ENCODE measurements at regions of chr16 and their contacts with region 1.

Region 1: GRCh38 chr16:10122546-10122945 is 59.7 kb downstream of the GRIN2A start:
- DNase-seq: peak; percentile 72
- H3K4me3 Mint-ChIP-seq: peak overlapping the region; percentile 46
- H3K27ac Mint-ChIP-seq: peak overlapping the region; percentile 83
- H3K4me1 Mint-ChIP-seq: peaks cover 68% of the 10 kb centered on the region
- H3K27me3 Mint-ChIP-seq: no peaks in the 10 kb centered on the region
- CTCF ChIP-seq: peak; percentile 69

Region 2: GRCh38 chr16:10031473-10031872 is 91.1 kb before region 1 on chr16:
- CTCF ChIA-PET with region 1: interaction called, 6 read pairs
- intact Hi-C with region 1: loop called (anchors 5 kb)
- DNase-seq: no peak
- H3K4me3 Mint-ChIP-seq: no peak overlapping the region
- H3K27ac Mint-ChIP-seq: no peak overlapping the region
- H3K4me1 Mint-ChIP-seq: peaks cover 31% of the 10 kb centered on the region
- H3K27me3 Mint-ChIP-seq: no peaks in the 10 kb centered on the region
- CTCF ChIP-seq: no peak

Region 3: GRCh38 chr16:10080036-10080772 is 42.3 kb before region 1 on chr16:
- CTCF ChIA-PET with region 1: interaction called, 5 read pairs
- intact Hi-C with region 1: loop called (anchors 1 kb)
- DNase-seq: peak; percentile 81
- H3K4me3 Mint-ChIP-seq: peak overlapping the region; percentile 54
- H3K27ac Mint-ChIP-seq: peak overlapping the region; percentile 94
- H3K4me1 Mint-ChIP-seq: peaks cover 88% of the 10 kb centered on the region
- H3K27me3 Mint-ChIP-seq: no peaks in the 10 kb centered on the region
- CTCF ChIP-seq: no peak

Region 4: GRCh38 chr16:10343124-10343760 is 220.7 kb after region 1 on chr16:
- CTCF ChIA-PET with region 1: no interaction called
- intact Hi-C with region 1: no loop called
- DNase-seq: no peak
- H3K4me3 Mint-ChIP-seq: no peak overlapping the region
- H3K27ac Mint-ChIP-seq: peak overlapping the region; percentile 77
- H3K4me1 Mint-ChIP-seq: peaks cover 18% of the 10 kb centered on the region
- H3K27me3 Mint-ChIP-seq: no peaks in the 10 kb centered on the region
- CTCF ChIP-seq: no peak